SK-N-SH (cell line): ENCODE measurements at regions of chr17 and their contacts with region 1.

Region 1: GRCh38 chr17:57622683-57623433 is 122.2 kb downstream of the CCDC182 start:
- DNase-seq: peak; percentile 82
- H3K4me3 ChIP-seq: no peak overlapping the region
- H3K27ac ChIP-seq: peak overlapping the region; percentile 87 to 100
- H3K4me1 ChIP-seq: peaks cover 53 to 84% of the 10 kb centered on the region in 2 experiments
- H3K27me3 ChIP-seq: no peaks in the 10 kb centered on the region
- CTCF ChIP-seq: no peak
- EP300 ChIP-seq: peak; percentile 71 to 97; a peak in 3 of 4 replicates
- RAD21 ChIP-seq: peak; percentile 46

Region 2: DNA sequence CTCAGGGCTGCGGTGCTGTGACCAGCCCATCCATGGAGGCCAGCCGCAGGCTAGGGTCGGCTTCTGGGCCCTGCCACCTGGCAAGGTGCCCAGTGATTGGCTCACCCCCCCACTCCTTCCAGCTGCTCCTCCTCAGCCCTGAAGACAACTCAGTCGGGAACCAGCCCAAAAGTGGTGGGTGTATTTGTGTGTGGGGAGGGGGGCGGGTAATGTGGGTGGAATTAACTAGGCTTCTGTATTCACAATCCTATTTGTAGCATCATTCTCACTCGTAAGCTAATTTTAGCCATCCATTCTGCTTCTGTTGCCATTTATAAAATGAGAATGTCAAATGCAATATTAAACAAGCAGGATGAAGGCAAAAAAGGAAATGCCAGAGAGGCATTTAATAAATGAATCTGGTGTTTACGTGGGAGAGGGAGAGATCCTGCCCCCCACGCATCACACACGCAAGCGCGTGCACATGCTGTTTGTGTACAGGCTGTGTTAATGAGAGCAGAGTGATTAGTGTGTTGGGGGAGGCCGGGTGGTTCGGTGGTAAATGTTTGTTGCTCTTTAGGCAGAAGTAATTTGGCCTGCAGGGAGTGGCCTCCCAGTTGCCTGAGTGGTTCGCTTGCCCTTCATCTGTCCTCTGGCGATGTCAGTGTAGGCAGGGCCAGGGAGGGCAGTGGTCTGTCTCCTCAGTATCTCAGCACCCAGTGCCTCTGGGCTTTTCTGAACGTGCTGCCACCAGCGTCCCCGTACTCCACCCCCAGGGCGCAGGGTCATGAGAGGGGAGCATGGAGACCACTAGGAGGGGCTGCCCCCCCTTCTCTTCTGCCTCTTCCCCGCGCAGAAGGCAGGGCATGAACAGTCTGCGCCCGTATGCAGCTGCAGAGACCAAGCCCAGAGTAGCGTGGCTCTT is 17.8 kb before region 1 on chr17:
- CTCF ChIA-PET with region 1: interaction called, 80 read pairs
- POLR2A ChIA-PET with region 1: interaction called, 54 read pairs
- DNase-seq: peak; percentile 89
- H3K4me3 ChIP-seq: peak overlapping the region in 1 of 2 experiments; percentile 18; a peak in 1 of 4 replicates
- H3K27ac ChIP-seq: peak overlapping the region; percentile 59 to 99; a peak in 3 of 4 replicates
- H3K4me1 ChIP-seq: peaks cover 26 to 90% of the 10 kb centered on the region in 2 experiments
- H3K27me3 ChIP-seq: no peaks in the 10 kb centered on the region
- CTCF ChIP-seq: no peak; the same call in 1 of the 2 replicates
- EP300 ChIP-seq: peak in 1 of 2 experiments; percentile 51; a peak in 2 of 4 replicates
- RAD21 ChIP-seq: peak; percentile 56

Region 3: GRCh38 chr17:57662644-57663308 is 39.9 kb after region 1 on chr17:
- CTCF ChIA-PET with region 1: interaction called, 5 read pairs
- POLR2A ChIA-PET with region 1: interaction called, 44 read pairs
- DNase-seq: peak; percentile 97
- H3K4me3 ChIP-seq: peak overlapping the region; percentile 45 to 47
- H3K27ac ChIP-seq: peak overlapping the region; percentile 99 to 100
- H3K4me1 ChIP-seq: peaks cover 28 to 79% of the 10 kb centered on the region in 2 experiments
- H3K27me3 ChIP-seq: no peaks in the 10 kb centered on the region
- CTCF ChIP-seq: peak; percentile 37
- EP300 ChIP-seq: peak; percentile 54 to 88; a peak in 3 of 4 replicates
- RAD21 ChIP-seq: no peak; the same call in none of the 2 replicates